H1 (cell line): ENCODE measurements at regions of chr1 and their contacts with region 1.

Region 1: DNA sequence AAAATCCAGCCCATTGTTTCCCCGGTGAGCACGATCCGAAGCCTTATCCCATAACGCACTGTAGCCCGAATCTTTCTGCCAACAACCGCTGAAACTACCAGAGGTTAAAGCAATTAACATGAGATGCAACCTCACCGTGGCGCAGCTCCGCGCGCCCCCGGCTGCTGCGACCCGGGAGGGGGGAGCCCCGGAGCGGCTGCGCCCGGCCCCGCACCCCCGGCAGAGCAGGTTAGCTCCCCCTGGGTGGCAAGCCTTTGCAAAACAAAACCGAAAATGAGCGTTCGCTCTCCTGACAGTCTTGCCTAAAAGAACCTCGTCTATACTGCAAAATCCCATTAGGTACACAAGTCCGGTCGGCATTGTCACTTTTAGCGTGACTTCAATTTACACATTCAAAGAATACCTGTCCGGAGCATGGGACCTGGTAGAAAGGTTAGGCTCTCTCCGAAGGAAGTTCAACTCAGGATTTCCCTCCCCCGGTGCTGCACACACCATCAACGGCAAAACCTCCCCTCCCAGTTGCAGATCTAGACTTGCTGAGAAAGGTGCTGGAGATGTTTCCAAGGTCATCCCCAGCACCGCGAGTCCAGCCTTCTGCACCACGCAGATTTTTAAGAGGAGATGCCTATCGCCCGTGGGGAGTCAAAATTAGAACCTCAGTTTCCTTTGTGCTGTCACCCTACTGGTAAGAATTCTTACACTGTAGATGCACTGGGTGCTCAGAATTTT is 107.5 kb downstream of the ZNF281 start:
- DNase-seq: peak in 1 of 2 experiments; percentile 64
- H3K4me3 ChIP-seq: peak overlapping the region; percentile 25 to 65 (median 56)
- H3K27ac ChIP-seq: no peak overlapping the region
- H3K4me1 ChIP-seq: peaks cover 0 to 6% (median 2%) of the 10 kb centered on the region in 4 experiments; a peak in 4 of 7 replicates
- H3K27me3 ChIP-seq: peaks cover 0 to 15% (median 12%) of the 10 kb centered on the region in 4 experiments; a peak in 5 of 7 replicates
- CTCF ChIP-seq: no peak
- EP300 ChIP-seq: no peak
- POLR2A ChIP-seq: no peak
- RAD21 ChIP-seq: no peak

Region 2: GRCh38 chr1:200048218-200048617 is 254.1 kb before region 1 on chr1:
- CTCF ChIA-PET with region 1: no interaction called
- POLR2A ChIA-PET with region 1: no interaction called
- DNase-seq: peak; percentile 84 to 88
- H3K4me3 ChIP-seq: peak overlapping the region; percentile 6 to 50 (median 12); a peak in 5 of 8 replicates
- H3K27ac ChIP-seq: peak overlapping the region; percentile 68
- H3K4me1 ChIP-seq: peaks cover 1 to 17% (median 10%) of the 10 kb centered on the region in 4 experiments; a peak in 5 of 7 replicates
- H3K27me3 ChIP-seq: peaks cover 0 to 10% (median 4%) of the 10 kb centered on the region in 4 experiments; a peak in 5 of 7 replicates
- CTCF ChIP-seq: no peak
- EP300 ChIP-seq: peak in 1 of 2 experiments; percentile 57; a peak in 1 of 3 replicates
- POLR2A ChIP-seq: peak in 1 of 2 experiments; percentile 51; a peak in 1 of 3 replicates
- RAD21 ChIP-seq: peak; percentile 2 to 6; a peak in 1 of 4 replicates

Region 3: GRCh38 chr1:200247518-200247917 is 54.8 kb before region 1 on chr1:
- CTCF ChIA-PET with region 1: no interaction called
- POLR2A ChIA-PET with region 1: no interaction called
- DNase-seq: no peak
- H3K4me3 ChIP-seq: no peak overlapping the region
- H3K27ac ChIP-seq: no peak overlapping the region
- H3K4me1 ChIP-seq: peaks cover 0 to 3% (median 0%) of the 10 kb centered on the region in 4 experiments; a peak in 2 of 7 replicates
- H3K27me3 ChIP-seq: no peaks in the 10 kb centered on the region
- CTCF ChIP-seq: no peak
- EP300 ChIP-seq: no peak
- POLR2A ChIP-seq: no peak
- RAD21 ChIP-seq: no peak

Region 4: GRCh38 chr1:200319148-200319547 is 16.8 kb after region 1 on chr1:
- CTCF ChIA-PET with region 1: interaction called, 15 read pairs
- POLR2A ChIA-PET with region 1: interaction called, 3 read pairs
- DNase-seq: no peak
- H3K4me3 ChIP-seq: no peak overlapping the region
- H3K27ac ChIP-seq: no peak overlapping the region
- H3K4me1 ChIP-seq: peaks cover 0 to 4% (median 0%) of the 10 kb centered on the region in 4 experiments; a peak in 1 of 7 replicates
- H3K27me3 ChIP-seq: no peaks in the 10 kb centered on the region
- CTCF ChIP-seq: no peak
- EP300 ChIP-seq: no peak
- POLR2A ChIP-seq: no peak
- RAD21 ChIP-seq: no peak

Region 5: GRCh38 chr1:200330741-200331430 is 28.5 kb after region 1 on chr1:
- CTCF ChIA-PET with region 1: interaction called, 14 read pairs
- POLR2A ChIA-PET with region 1: no interaction called
- DNase-seq: no peak
- H3K4me3 ChIP-seq: no peak overlapping the region
- H3K27ac ChIP-seq: no peak overlapping the region
- H3K4me1 ChIP-seq: peaks cover 6 to 9% (median 8%) of the 10 kb centered on the region in 4 experiments
- H3K27me3 ChIP-seq: no peaks in the 10 kb centered on the region
- CTCF ChIP-seq: no peak
- EP300 ChIP-seq: no peak
- POLR2A ChIP-seq: no peak
- RAD21 ChIP-seq: no peak

Region 6: GRCh38 chr1:200342511-200343311 is 40.4 kb after region 1 on chr1:
- CTCF ChIA-PET with region 1: interaction called, 13 read pairs
- POLR2A ChIA-PET with region 1: no interaction called
- DNase-seq: no peak
- H3K4me3 ChIP-seq: no peak overlapping the region
- H3K27ac ChIP-seq: no peak overlapping the region
- H3K4me1 ChIP-seq: peaks cover 0 to 4% (median 3%) of the 10 kb centered on the region in 4 experiments; a peak in 2 of 7 replicates
- H3K27me3 ChIP-seq: no peaks in the 10 kb centered on the region
- CTCF ChIP-seq: no peak
- EP300 ChIP-seq: no peak
- POLR2A ChIP-seq: no peak
- RAD21 ChIP-seq: no peak

Region 7: GRCh38 chr1:200372080-200372884 is 69.9 kb after region 1 on chr1:
- CTCF ChIA-PET with region 1: interaction called, 10 read pairs
- POLR2A ChIA-PET with region 1: no interaction called
- DNase-seq: peak; percentile 36 to 43
- H3K4me3 ChIP-seq: peak overlapping the region in 1 of 4 experiments; percentile 56; a peak in 1 of 8 replicates
- H3K27ac ChIP-seq: no peak overlapping the region
- H3K4me1 ChIP-seq: peaks cover 2 to 25% (median 11%) of the 10 kb centered on the region in 4 experiments; a peak in 6 of 7 replicates
- H3K27me3 ChIP-seq: no peaks in the 10 kb centered on the region
- CTCF ChIP-seq: no peak
- EP300 ChIP-seq: no peak
- POLR2A ChIP-seq: no peak
- RAD21 ChIP-seq: no peak

Region 8: GRCh38 chr1:200639790-200640669 is 337.7 kb after region 1 on chr1:
- CTCF ChIA-PET with region 1: no interaction called
- POLR2A ChIA-PET with region 1: no interaction called
- DNase-seq: no peak
- H3K4me3 ChIP-seq: no peak overlapping the region
- H3K27ac ChIP-seq: no peak overlapping the region
- H3K4me1 ChIP-seq: no peaks in the 10 kb centered on the region
- H3K27me3 ChIP-seq: no peaks in the 10 kb centered on the region
- CTCF ChIP-seq: no peak
- EP300 ChIP-seq: no peak
- POLR2A ChIP-seq: no peak
- RAD21 ChIP-seq: no peak